ENCODE measurements at regions of chr14 and their contacts with region 1.

Region 1: DNA sequence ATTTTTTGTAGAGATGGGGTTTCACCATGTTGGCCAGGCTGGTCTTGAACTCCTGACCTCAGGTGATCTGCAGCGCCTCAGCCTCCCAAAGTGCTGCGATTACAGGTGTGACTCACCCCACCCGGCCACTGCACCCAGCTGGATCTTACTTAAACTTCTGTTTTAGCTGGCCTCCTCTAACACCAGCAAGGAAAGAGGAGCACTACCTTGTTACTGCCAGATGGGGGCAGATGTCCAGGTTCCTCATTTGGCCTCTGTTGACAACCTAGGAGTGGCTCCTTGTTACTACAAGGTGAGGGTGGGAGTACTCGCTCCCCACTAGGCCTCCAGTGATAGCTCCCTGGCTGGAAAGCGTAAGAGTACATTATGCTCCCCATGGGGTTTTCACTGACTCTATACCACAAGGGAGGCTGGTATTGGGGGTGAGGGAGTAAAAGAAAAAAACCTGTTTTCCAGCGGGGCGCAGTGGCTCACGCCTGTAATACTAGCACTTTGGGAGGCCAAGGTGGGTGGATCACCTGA is 13.1 kb upstream of the ARF6 start:
- DNase-seq: peak; percentile 65
- H3K4me3 ChIP-seq: no peak overlapping the region
- H3K27ac ChIP-seq: no peak overlapping the region
- H3K4me1 ChIP-seq: no peaks in the 10 kb centered on the region
- H3K27me3 ChIP-seq: no peaks in the 10 kb centered on the region
- CTCF ChIP-seq: peak; percentile 69
- EP300 ChIP-seq: no peak
- RAD21 ChIP-seq: peak; percentile 70

Region 2: GRCh38 chr14:49892636-49893308 is 13.0 kb after region 1 on chr14 and contains the start of gene ARF6:
- CTCF ChIA-PET with region 1: interaction called, 11 read pairs
- POLR2A ChIA-PET with region 1: interaction called, 5 read pairs
- DNase-seq: peak; percentile 98
- H3K4me3 ChIP-seq: peak within 1 kb of the TSS; percentile 85 to 91
- H3K27ac ChIP-seq: peak within 1 kb of the TSS; percentile 93 to 98
- H3K4me1 ChIP-seq: peaks cover 12 to 19% of the 10 kb centered on the region in 2 experiments
- H3K27me3 ChIP-seq: no peaks in the 10 kb centered on the region
- CTCF ChIP-seq: no peak
- EP300 ChIP-seq: peak; percentile 2 to 4; a peak in 1 of 4 replicates
- RAD21 ChIP-seq: no peak; the same call in none of the 2 replicates
- polyA plus RNA-seq, gene ARF6: 32.2 and 45.2 TPM in 2 replicates

Region 3: DNA sequence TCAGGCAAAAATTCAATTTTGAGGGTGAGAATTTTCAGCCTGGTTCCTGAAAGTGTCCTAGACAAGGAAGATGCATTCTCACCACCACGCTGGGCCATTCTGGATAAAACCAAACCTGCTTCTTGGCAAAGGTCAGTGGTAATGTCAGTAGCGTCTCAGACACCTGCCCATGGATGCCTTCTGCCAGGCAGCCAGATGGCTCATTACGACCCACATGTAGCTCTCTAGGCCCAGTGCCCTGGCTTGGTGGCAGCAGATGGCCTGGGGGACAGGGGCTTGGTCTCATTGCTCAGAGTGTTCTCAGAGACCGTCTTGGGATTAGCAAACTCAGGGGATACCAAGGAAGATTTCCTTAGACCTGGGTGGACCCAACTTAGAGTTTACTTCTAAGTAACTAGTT is 118.2 kb after region 1 on chr14:
- CTCF ChIA-PET with region 1: no interaction called
- POLR2A ChIA-PET with region 1: no interaction called
- DNase-seq: no peak
- H3K4me3 ChIP-seq: no peak overlapping the region
- H3K27ac ChIP-seq: no peak overlapping the region; a peak in 1 of 4 replicates
- H3K4me1 ChIP-seq: peaks cover 35 to 39% of the 10 kb centered on the region in 2 experiments
- H3K27me3 ChIP-seq: no peaks in the 10 kb centered on the region
- CTCF ChIP-seq: no peak
- EP300 ChIP-seq: no peak
- RAD21 ChIP-seq: no peak

Measured in SK-N-SH (cell line).